Right ventricle myocardium inferior (tissue), 1 donor: ENCODE measurements at regions of chr4 and their contacts with region 1.

Region 1: DNA sequence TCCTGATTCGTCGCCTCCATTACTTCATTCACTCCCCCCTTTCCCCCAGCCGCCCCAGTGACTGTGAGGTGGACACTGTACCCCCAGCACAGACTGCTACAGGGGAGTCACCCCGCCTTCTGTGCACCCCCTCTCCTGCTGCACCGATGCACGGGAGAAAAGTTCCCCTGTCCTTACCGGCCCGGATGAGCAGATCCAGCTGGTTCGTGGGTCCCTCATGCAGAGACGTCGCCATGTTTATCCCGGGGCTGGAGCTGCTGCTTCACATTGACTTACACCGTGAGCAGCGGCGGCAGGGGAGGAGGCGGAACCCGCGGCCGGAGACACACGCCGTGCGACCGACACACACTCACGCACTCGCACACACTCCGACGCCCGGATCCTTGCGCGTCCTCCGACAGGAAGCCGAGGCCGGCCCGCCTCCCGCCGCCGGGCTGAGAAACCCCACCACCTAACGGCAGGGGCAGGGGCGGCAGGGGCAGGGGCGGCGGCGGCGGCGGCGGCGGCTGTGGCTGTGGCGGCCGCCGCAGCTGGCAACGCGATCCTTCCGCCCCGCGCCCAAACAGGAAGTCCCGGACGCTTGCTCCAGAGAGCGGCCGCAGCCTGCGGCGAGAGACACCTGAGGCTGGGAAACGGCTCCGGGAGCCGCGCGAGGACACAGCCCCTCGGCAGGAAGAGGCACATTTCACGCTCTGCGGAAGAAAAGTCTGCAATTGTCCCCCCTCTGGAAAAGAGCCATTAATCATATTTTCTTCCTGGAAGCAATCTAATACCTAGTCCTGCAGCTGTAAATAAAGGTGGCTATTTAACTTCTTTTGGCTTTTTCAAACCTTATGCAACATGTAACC is 68.6 kb downstream of the NOCT start:
- DNase-seq: peak; percentile 94
- ATAC-seq: peak; percentile 81

Region 2: GRCh38 chr4:139123910-139124309 is 39.7 kb after region 1 on chr4:
- intact Hi-C with region 1: no loop called
- DNase-seq: no peak
- ATAC-seq: no peak

Region 3: GRCh38 chr4:139301113-139301820 is 217.1 kb after region 1 on chr4 and contains the start of gene NAA15:
- intact Hi-C with region 1: loop called (anchors 2 kb)
- DNase-seq: peak; percentile 98
- ATAC-seq: peak; percentile 98
- total RNA-seq, gene NAA15: 36.5 TPM

Region 4: GRCh38 chr4:140095694-140096482 is 1011.7 kb after region 1 on chr4:
- intact Hi-C with region 1: no loop called
- DNase-seq: no peak
- ATAC-seq: no peak